Activated CD8-positive, alpha-beta T cell treated with anti-CD3 and anti-CD28 coated beads, Interleukin-2, amount 10 ng/mL, durations not matched to agents 7 days and 5 days (primary cell): ENCODE measurements at regions of chr1 and their contacts with region 1.

Region 1: GRCh38 chr1:223161321-223161720 is 18.3 kb upstream of the TLR5 start:
- DNase-seq: no peak
- ATAC-seq: peak; percentile 30
- H3K4me3 Mint-ChIP-seq: no peak overlapping the region
- H3K27ac Mint-ChIP-seq: no peak overlapping the region
- H3K4me1 Mint-ChIP-seq: peaks cover 6% of the 10 kb centered on the region
- H3K27me3 Mint-ChIP-seq: no peaks in the 10 kb centered on the region

Region 2: GRCh38 chr1:223142795-223143536 is 18.4 kb before region 1 on chr1 and contains the start of gene TLR5:
- CTCF ChIA-PET with region 1: interaction called, 14 read pairs
- POLR2A ChIA-PET with region 1: interaction called, 4 read pairs
- DNase-seq: peak; percentile 89
- ATAC-seq: peak; percentile 94
- H3K4me3 Mint-ChIP-seq: peak within 1 kb of the TSS; percentile 68
- H3K27ac Mint-ChIP-seq: peak within 1 kb of the TSS; percentile 50
- H3K4me1 Mint-ChIP-seq: peaks cover 10% of the 10 kb centered on the region
- H3K27me3 Mint-ChIP-seq: peaks cover 12% of the 10 kb centered on the region
- total RNA-seq, gene TLR5: 0.32 to 0.44 TPM